Adrenal gland (tissue), 19 donors: ENCODE measurements at regions of chr5 and their contacts with region 1.

Region 1: DNA sequence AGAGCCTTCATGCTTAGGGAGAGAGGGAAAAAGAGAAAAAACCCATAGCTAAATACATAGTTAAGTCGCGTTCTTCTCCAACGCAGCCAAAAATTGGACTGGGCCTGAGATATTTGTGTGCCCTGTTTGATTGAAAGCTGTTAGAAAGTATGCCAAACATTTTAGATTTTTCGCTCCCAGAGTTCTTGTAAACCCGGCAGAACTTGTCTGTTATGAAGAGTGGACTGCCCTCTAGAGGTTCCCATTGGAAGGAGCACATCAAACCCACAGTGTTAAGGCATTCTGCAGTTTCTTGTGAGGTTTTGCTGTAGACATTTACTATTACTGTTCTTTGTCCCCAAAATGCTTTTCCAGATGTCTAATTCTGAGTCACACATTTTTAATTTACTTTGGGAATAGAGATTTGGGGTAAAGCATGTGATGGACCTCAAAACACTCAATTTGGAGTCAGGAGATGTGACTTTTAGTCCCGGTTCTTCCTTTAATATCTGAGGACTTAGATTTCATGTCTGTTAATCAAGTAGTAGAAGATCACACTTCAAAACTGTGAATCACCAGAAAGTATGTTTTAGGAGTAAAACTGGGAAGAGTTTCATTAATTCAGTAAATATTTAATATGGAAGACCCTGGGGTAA is 96.6 kb downstream of the PCSK1 start:
- DNase-seq: peak; percentile 71 to 93 (median 77)
- H3K4me3 ChIP-seq: no peak overlapping the region
- H3K27ac ChIP-seq: no peak overlapping the region
- H3K4me1 ChIP-seq: peaks cover 5 to 15% of the 10 kb centered on the region in 2 donors
- H3K27me3 ChIP-seq: no peaks in the 10 kb centered on the region
- CTCF ChIP-seq: peak; percentile 80 to 90 (median 86)
- POLR2A ChIP-seq: no peak

Region 2: DNA sequence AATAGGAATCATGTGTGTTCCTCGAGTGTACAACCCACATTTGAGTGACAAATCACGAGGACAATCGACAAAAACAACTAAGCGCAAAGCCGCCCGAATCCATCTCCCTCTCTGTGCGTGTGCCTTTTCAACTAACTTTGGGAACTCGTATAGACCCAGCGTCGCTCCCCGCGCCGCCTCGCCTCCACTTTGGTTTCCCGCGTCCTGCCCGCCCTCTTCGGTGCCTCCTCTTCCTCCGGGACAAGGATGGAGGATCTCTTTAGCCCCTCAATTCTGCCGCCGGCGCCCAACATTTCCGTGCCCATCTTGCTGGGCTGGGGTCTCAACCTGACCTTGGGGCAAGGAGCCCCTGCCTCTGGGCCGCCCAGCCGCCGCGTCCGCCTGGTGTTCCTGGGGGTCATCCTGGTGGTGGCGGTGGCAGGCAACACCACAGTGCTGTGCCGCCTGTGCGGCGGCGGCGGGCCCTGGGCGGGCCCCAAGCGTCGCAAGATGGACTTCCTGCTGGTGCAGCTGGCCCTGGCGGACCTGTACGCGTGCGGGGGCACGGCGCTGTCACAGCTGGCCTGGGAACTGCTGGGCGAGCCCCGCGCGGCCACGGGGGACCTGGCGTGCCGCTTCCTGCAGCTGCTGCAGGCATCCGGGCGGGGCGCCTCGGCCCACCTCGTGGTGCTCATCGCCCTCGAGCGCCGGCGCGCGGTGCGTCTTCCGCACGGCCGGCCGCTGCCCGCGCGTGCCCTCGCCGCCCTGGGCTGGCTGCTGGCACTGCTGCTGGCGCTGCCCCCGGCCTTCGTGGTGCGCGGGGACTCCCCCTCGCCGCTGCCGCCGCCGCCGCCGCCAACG is 716.2 kb before region 1 on chr5 and contains the start of gene GPR150:
- intact Hi-C with region 1: loop called in 1 of 2 experiments (anchors 10 kb)
- DNase-seq: peak; percentile 44 to 65 (median 57)
- H3K4me3 ChIP-seq: peak within 1 kb of the TSS in 3 of 4 donors; percentile 5 to 91 (median 21)
- H3K27ac ChIP-seq: peak within 1 kb of the TSS in 2 of 5 donors; percentile 17 to 45
- H3K4me1 ChIP-seq: peaks cover 4 to 22% of the 10 kb centered on the region in 2 donors
- H3K27me3 ChIP-seq: no peaks in the 10 kb centered on the region
- CTCF ChIP-seq: peak in 1 of 6 experiments; percentile 7
- POLR2A ChIP-seq: no peak
- total RNA-seq, gene GPR150: 0.06 to 0.74 (median 0.35) TPM

Region 3: GRCh38 chr5:95858661-95859326 is 477.7 kb before region 1 on chr5:
- intact Hi-C with region 1: loop called (anchors 5 kb)
- DNase-seq: peak; percentile 90 to 96 (median 94)
- H3K4me3 ChIP-seq: peak overlapping the region in 1 of 4 donors; percentile 48
- H3K27ac ChIP-seq: peak overlapping the region; percentile 27 to 97 (median 83)
- H3K4me1 ChIP-seq: peaks cover 15 to 53% of the 10 kb centered on the region in 2 donors
- H3K27me3 ChIP-seq: no peaks in the 10 kb centered on the region
- CTCF ChIP-seq: peak; percentile 99 to 100 (median 99)
- POLR2A ChIP-seq: peak; percentile 16 to 44

Region 4: GRCh38 chr5:95961617-95962474 is 374.6 kb before region 1 on chr5 and contains the start of gene ELL2:
- intact Hi-C with region 1: loop called in 1 of 2 experiments (anchors 10 kb)
- DNase-seq: peak; percentile 98 to 99 (median 98)
- H3K4me3 ChIP-seq: peak within 1 kb of the TSS; percentile 52 to 80 (median 55)
- H3K27ac ChIP-seq: peak within 1 kb of the TSS; percentile 65 to 99 (median 91)
- H3K4me1 ChIP-seq: peaks cover 0 to 38% of the 10 kb centered on the region in 2 donors
- H3K27me3 ChIP-seq: no peaks in the 10 kb centered on the region
- CTCF ChIP-seq: no peak
- POLR2A ChIP-seq: peak; percentile 91 to 92
- total RNA-seq, gene ELL2: 3.4 to 27.5 (median 15.2) TPM